WTC11 (cell line): ENCODE measurements at regions of chr20 and their contacts with region 1.

Region 1: GRCh38 chr20:45373353-45374100 is 4.6 kb downstream of the TP53TG5 start:
- DNase-seq: peak; percentile 94
- ATAC-seq: peak; percentile 89
- H3K4me3 Mint-ChIP-seq: peak overlapping the region; percentile 73
- H3K27ac Mint-ChIP-seq: no peak overlapping the region
- H3K4me1 Mint-ChIP-seq: peaks cover 13% of the 10 kb centered on the region
- H3K27me3 Mint-ChIP-seq: peaks cover 6% of the 10 kb centered on the region
- CTCF ChIP-seq: peak; percentile 92

Region 2: DNA sequence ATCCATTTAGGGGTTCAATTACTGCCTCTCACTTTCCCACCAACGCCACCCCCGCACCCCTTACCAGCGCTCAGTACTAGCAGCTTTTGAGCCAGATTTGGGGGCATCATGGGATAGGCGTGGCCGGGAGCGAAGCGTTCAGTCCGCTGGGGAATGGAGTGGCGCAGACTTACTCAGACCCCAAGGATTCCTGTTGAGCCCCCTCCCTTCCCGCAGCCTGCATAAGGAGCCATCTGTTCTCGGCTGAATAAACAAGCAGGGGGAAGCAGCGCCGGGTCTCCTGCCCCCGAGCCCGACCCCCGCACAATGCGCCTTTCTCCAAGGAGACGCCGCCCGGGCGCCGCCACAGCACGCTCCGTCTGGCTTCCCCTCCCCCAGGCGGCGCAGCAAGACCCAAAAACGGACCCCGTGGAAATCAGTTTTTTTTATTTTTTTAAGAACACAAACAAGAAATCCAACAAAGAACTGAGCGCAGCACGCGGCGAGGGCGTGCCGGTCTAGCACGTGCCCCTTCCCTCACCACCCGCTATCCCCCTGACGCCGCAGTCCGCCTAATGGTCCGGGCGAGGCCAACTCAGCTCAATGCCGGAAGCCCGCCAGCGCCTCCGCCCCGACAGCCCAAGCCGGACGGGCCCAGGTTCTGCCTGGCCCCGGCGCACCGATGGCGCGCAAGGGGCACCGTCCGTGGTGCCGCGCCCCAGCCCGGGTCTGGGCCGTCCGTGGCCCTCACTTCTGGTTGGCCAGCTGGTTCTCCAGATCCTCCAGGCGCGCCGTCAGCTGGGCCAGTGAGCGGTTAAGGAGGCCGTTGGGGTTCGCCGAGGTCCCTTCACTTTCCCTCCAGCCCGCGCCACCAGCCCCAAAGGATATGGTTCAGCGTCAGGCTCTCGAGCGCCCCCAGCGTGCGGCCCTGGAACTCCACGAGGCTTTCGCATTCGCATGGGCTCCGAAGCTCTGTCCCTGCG is 80.2 kb before region 1 on chr20:
- CTCF ChIA-PET with region 1: interaction called, 23 read pairs
- POLR2A ChIA-PET with region 1: no interaction called
- DNase-seq: peak; percentile 95
- ATAC-seq: peak; percentile 87
- H3K4me3 Mint-ChIP-seq: peak overlapping the region; percentile 71
- H3K27ac Mint-ChIP-seq: no peak overlapping the region
- H3K4me1 Mint-ChIP-seq: peaks cover 7% of the 10 kb centered on the region; the same call in 1 of the 2 replicates
- H3K27me3 Mint-ChIP-seq: peaks cover 66% of the 10 kb centered on the region
- CTCF ChIP-seq: peak; percentile 95

Region 3: GRCh38 chr20:45311589-45312211 is 61.8 kb before region 1 on chr20:
- CTCF ChIA-PET with region 1: interaction called, 32 read pairs
- POLR2A ChIA-PET with region 1: no interaction called
- DNase-seq: peak; percentile 92
- ATAC-seq: peak; percentile 68
- H3K4me3 Mint-ChIP-seq: peak overlapping the region; percentile 63
- H3K27ac Mint-ChIP-seq: no peak overlapping the region
- H3K4me1 Mint-ChIP-seq: peaks cover 15% of the 10 kb centered on the region
- H3K27me3 Mint-ChIP-seq: peaks cover 33% of the 10 kb centered on the region
- CTCF ChIP-seq: peak; percentile 71

Region 4: GRCh38 chr20:45347936-45348778 is 25.4 kb before region 1 on chr20 and contains the start of gene SDC4:
- CTCF ChIA-PET with region 1: interaction called, 15 read pairs
- POLR2A ChIA-PET with region 1: interaction called, 4 read pairs
- DNase-seq: peak; percentile 68
- ATAC-seq: peak; percentile 63
- H3K4me3 Mint-ChIP-seq: peak within 1 kb of the TSS; percentile 89
- H3K27ac Mint-ChIP-seq: peak within 1 kb of the TSS; percentile 19
- H3K4me1 Mint-ChIP-seq: peaks cover 45% of the 10 kb centered on the region
- H3K27me3 Mint-ChIP-seq: no peaks in the 10 kb centered on the region
- CTCF ChIP-seq: no peak
- total RNA-seq, gene SDC4: 64.0 to 69.6 TPM (median 69.5 TPM) in 3 replicates

Region 5: GRCh38 chr20:45392733-45393132 is 19.2 kb after region 1 on chr20:
- CTCF ChIA-PET with region 1: interaction called, 25 read pairs
- POLR2A ChIA-PET with region 1: interaction called, 6 read pairs
- DNase-seq: no peak
- ATAC-seq: peak; percentile 69
- H3K4me3 Mint-ChIP-seq: no peak overlapping the region
- H3K27ac Mint-ChIP-seq: no peak overlapping the region
- H3K4me1 Mint-ChIP-seq: no peaks in the 10 kb centered on the region
- H3K27me3 Mint-ChIP-seq: no peaks in the 10 kb centered on the region
- CTCF ChIP-seq: no peak

Region 6: GRCh38 chr20:45427236-45428149 is 54.0 kb after region 1 on chr20:
- CTCF ChIA-PET with region 1: interaction called, 18 read pairs
- POLR2A ChIA-PET with region 1: interaction called, 3 read pairs
- DNase-seq: no peak
- ATAC-seq: 0 out of 2 replicates have a peak, but pooled peaks have one; percentile 26
- H3K4me3 Mint-ChIP-seq: no peak overlapping the region
- H3K27ac Mint-ChIP-seq: no peak overlapping the region
- H3K4me1 Mint-ChIP-seq: no peaks in the 10 kb centered on the region
- H3K27me3 Mint-ChIP-seq: no peaks in the 10 kb centered on the region
- CTCF ChIP-seq: no peak

Region 7: DNA sequence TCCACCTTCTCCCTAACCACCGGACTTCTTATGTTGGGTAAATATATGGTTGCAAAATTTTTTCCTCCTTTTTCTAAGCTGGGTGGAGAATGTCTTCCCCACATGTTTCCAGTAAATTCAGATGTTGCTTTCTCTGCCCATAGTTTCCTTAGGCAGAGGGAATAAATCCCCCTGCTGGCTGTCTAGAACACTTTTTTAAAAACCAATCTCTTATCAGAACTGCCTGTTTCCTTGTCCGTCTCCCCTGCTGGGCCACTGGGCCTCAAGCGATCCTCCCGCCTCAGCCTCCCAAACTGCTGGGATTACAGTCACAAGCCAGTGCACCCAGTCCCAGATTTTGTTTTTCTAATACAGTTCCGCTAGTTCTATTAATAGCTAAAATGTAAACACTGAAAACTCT is 86.1 kb after region 1 on chr20:
- CTCF ChIA-PET with region 1: interaction called, 67 read pairs
- POLR2A ChIA-PET with region 1: no interaction called
- DNase-seq: no peak
- ATAC-seq: no peak
- H3K4me3 Mint-ChIP-seq: no peak overlapping the region
- H3K27ac Mint-ChIP-seq: no peak overlapping the region
- H3K4me1 Mint-ChIP-seq: no peaks in the 10 kb centered on the region; the same call in 1 of the 2 replicates
- H3K27me3 Mint-ChIP-seq: no peaks in the 10 kb centered on the region
- CTCF ChIP-seq: no peak